ENCODE measurements at regions of chr19 and their contacts with region 1.

Region 1: DNA sequence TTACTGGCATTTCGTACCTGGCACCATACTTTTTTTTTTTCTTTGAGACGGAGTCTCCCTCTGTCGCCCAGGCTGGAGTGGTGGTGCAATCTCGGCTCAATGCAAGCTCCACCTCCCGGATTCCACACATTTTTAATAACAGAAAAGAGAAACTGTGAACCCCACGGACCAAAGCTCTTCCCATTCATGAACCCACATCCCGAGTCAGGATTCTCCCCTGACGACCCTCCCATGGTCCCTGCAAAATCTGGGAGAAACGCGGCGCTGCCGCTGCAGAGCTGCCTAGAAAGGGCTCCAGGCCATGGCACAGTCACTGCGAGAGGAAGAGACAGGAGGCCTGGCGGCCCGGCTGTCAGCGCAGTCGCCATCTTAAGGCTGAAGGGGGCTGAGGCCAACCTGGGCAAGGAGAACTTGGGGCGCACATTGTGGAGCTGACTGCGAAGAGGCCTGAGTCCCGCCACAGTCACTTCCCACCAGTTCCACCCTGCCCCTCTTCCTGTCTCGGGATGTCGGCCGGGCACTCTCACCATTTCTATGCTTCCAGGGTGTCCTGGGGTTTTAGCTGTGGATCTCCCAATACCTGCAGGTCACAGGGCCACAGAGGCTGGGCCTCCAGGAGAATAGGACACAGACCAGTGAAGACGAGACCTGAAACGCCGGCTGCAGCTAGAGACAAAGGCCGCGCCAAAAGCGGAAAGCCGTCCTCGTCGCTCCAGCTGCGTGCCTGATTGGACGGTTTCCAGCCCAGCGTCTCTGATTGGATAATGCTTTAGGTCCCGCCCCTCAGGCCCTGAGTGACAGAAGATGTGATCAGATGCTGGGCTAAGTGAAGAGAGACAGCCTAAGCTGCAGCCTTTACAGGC is 71.0 kb downstream of the ZNF486 start:
- DNase-seq: peak; percentile 94
- H3K4me3 ChIP-seq: peak overlapping the region; percentile 34 to 72 (median 56)
- H3K27ac ChIP-seq: peak overlapping the region in 2 of 4 donors; percentile 31 to 59
- H3K4me1 ChIP-seq: peaks cover 0 to 10% (median 4%) of the 10 kb centered on the region in 4 donors
- H3K27me3 ChIP-seq: no peaks in the 10 kb centered on the region
- CTCF ChIP-seq: no peak
- EP300 ChIP-seq: no peak
- POLR2A ChIP-seq: no peak

Region 2: GRCh38 chr19:19643158-19644053 is 594.6 kb before region 1 on chr19 and contains the start of gene GMIP:
- intact Hi-C with region 1: loop called (anchors 5 kb)
- DNase-seq: peak; percentile 84
- H3K4me3 ChIP-seq: peak within 1 kb of the TSS; percentile 49 to 82 (median 71)
- H3K27ac ChIP-seq: peak within 1 kb of the TSS; percentile 19 to 73 (median 54)
- H3K4me1 ChIP-seq: peaks cover 0 to 18% (median 10%) of the 10 kb centered on the region in 4 donors
- H3K27me3 ChIP-seq: no peaks in the 10 kb centered on the region
- CTCF ChIP-seq: peak; percentile 65 to 91 (median 86)
- EP300 ChIP-seq: no peak
- POLR2A ChIP-seq: no peak
- total RNA-seq, gene GMIP: 5.0 to 9.1 (median 6.4) TPM

Region 3: GRCh38 chr19:20278342-20278741 is 40.4 kb after region 1 on chr19:
- intact Hi-C with region 1: no loop called
- DNase-seq: no peak
- H3K4me3 ChIP-seq: no peak overlapping the region
- H3K27ac ChIP-seq: no peak overlapping the region
- H3K4me1 ChIP-seq: no peaks in the 10 kb centered on the region
- H3K27me3 ChIP-seq: no peaks in the 10 kb centered on the region
- CTCF ChIP-seq: peak in 1 of 4 experiments; percentile 48
- EP300 ChIP-seq: no peak
- POLR2A ChIP-seq: no peak

Measured in sigmoid colon (tissue), 7 donors.